ENCODE measurements at regions of chr7 and their contacts with region 1.

Region 1: DNA sequence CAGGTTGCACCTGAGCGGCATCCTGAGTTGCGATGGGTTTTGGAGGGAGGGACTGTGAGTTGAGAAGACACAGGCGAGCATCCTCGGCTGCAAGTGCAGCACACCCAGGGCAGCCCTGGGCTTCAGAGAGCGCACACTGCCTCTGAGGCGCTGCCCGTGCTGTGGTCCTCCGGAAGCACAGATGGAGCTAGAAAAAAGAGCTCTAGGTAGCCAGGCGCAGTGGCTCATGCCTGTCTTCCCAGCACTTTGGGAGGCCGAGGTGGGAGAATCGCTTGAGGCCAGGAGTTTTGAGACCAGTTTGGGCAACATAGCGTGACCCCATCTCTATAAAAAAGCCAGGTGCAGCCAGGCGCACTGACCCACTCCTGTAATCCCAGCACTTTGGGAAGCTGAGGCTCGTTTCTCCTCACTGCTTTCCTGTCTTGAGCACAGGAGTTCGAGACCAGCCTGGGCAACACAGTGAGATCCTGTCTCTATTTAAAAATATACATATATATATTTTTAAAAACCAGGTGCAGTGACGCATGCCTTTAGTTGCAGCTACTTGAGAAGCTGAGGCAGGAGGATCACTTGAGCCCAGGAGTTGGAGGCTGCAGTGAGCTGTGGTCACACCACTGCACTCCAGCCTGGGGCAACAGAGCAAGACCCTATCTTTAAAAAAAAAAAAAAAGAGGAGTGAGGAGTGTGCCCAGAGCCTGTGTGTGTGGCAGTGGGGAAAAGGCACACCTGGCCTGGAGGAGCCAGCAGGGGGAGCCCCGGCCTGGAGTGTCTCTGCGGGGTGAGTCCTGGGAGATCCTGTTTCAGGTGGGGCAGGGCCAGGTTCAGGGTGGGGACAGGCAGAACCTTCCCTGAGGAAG is 9.3 kb upstream of the ARPC1B start:
- DNase-seq: peak in 2 of 3 donors; percentile 41 to 48
- H3K4me3 ChIP-seq: no peak overlapping the region
- H3K27ac ChIP-seq: no peak overlapping the region
- H3K4me1 ChIP-seq: peaks cover 0 to 12% (median 3%) of the 10 kb centered on the region in 4 experiments
- H3K27me3 ChIP-seq: no peaks in the 10 kb centered on the region

Region 2: GRCh38 chr7:99386584-99387238 is 21.5 kb after region 1 on chr7:
- CTCF ChIA-PET with region 1: interaction called, 24 read pairs
- POLR2A ChIA-PET with region 1: no interaction called
- DNase-seq: peak in 2 of 3 donors; percentile 82 to 85
- H3K4me3 ChIP-seq: no peak overlapping the region
- H3K27ac ChIP-seq: no peak overlapping the region
- H3K4me1 ChIP-seq: peaks cover 0 to 20% (median 8%) of the 10 kb centered on the region in 4 experiments
- H3K27me3 ChIP-seq: no peaks in the 10 kb centered on the region

Region 3: DNA sequence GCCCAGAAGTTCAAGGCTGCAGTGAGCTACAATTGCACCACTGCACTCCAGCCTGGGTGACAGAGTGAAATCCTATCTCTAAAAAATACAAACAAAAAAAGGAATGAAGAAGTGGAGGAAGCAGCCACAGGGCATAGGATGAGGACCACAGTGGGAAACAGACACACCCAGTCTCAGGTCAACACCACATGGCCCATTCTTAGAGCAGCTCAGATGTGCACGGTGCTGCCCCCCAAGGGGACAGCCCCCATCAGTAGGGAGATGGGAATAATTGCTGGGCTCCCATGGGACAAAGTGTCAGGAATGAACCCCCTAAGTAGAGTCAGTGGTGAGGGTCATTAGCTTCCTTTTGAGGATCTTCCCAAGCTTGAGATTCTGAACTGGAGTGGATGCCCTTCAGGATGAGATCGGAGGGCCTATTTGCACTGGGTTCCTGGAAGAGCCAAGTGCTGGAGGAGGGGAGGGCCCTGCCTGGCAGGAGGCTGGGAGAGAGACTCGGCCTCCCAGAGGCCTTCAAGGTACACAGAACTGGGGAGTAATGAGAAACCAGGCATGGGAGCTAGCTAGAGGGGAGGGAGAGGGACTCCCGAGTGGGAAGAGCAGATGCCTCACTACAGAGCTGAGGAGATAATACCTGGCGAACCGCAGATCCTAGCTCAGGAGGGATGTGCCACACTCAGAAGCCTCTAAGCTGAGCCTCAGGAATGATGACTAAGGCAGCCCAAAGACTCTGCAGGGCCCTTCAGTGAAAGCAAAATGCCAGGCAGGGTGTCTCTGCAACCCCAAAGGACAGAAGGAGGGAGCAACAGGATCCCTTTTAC is 33.6 kb after region 1 on chr7:
- CTCF ChIA-PET with region 1: interaction called, 18 read pairs
- POLR2A ChIA-PET with region 1: no interaction called
- DNase-seq: no peak
- H3K4me3 ChIP-seq: no peak overlapping the region
- H3K27ac ChIP-seq: no peak overlapping the region
- H3K4me1 ChIP-seq: peaks cover 0 to 1% (median under 1%) of the 10 kb centered on the region in 4 experiments
- H3K27me3 ChIP-seq: no peaks in the 10 kb centered on the region

Region 4: DNA sequence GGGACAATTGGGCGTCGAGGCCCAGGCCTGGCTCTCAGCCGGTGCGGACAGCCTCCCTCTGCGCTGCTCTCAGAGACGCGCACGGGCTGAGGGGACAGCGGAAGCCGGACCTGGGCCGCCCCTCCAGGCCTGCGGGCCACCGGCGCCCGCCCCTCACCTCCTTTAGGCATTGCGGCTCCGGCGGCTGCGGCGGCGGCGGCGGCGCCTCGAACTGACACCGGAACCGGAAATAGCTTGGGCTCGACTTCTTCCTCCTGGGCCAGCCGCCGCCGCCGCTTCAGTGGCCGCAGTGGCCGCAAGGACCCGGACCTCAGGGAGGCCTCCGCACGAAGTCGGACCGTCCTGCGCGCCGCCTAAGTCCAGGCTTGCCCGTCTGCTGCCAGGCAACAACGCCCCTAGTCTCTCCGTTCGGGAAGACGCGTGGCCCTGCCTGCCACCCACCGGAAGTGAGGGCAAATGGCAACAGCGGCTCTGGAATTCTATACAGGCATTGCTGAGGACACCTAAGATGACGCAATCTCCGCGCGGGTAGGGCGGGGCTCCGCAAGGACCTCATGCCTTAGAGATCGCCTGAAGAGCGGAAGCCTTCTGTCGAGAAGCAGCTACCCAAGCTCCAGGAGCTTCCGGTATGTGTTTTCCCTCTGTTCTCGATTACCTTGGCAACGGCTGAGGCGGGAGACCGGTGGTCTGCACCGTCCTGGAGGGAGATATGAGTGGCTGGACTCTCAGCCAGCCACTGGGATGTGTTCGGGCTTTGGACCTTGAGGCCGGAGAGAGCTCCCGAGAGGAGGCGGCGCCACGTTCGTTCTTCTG is 43.4 kb after region 1 on chr7 and contains the starts of genes BUD31 and PDAP1:
- CTCF ChIA-PET with region 1: interaction called, 10 read pairs
- POLR2A ChIA-PET with region 1: no interaction called
- DNase-seq: peak; percentile 96 to 98 (median 98)
- H3K4me3 ChIP-seq: peak within 1 kb of the TSS; percentile 82 to 99 (median 94)
- H3K27ac ChIP-seq: peak within 1 kb of the TSS; percentile 96 to 99
- H3K4me1 ChIP-seq: peaks cover 22 to 33% (median 32%) of the 10 kb centered on the region in 4 experiments
- H3K27me3 ChIP-seq: no peaks in the 10 kb centered on the region